Esophagus squamous epithelium (tissue), 5 donors: ENCODE measurements at regions of chr14 and their contacts with region 1.

Region 1: DNA sequence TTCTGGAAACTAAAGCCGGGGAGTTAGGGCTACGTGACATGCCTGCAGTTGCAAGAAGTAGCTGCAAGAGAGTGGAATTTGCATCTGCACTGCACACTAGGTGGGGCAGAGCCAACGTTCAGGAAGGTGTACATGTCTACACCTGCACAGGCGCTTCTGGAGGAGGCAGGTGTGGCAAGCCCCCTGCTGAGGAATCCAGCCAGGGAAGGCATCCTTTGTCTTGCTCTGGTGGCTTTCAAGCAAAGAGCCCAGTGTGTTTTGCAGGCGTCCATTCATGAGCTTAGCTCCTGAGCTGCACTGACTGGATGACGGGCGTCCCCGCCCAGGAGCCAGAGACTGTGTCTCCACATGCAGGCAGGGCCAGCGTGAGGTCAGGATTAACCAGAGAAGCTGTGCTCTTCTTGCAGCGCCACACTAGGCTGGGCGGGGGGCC is 116.3 kb downstream of the ZFP36L1 start:
- DNase-seq: no peak
- H3K4me3 ChIP-seq: no peak overlapping the region
- H3K27ac ChIP-seq: peak overlapping the region; percentile 83 to 93 (median 85)
- H3K4me1 ChIP-seq: peaks cover 42 to 86% (median 63%) of the 10 kb centered on the region in 3 donors
- H3K27me3 ChIP-seq: no peaks in the 10 kb centered on the region
- CTCF ChIP-seq: peak in 2 of 6 experiments; percentile 11 to 15
- POLR2A ChIP-seq: no peak

Region 2: GRCh38 chr14:68548194-68549056 is 128.1 kb before region 1 on chr14:
- intact Hi-C with region 1: loop called (anchors 10 kb)
- DNase-seq: no peak
- H3K4me3 ChIP-seq: peak overlapping the region in 1 of 4 donors; percentile 33
- H3K27ac ChIP-seq: peak overlapping the region; percentile 94 to 99 (median 96)
- H3K4me1 ChIP-seq: peaks cover 72 to 100% (median 73%) of the 10 kb centered on the region in 3 donors
- H3K27me3 ChIP-seq: no peaks in the 10 kb centered on the region
- CTCF ChIP-seq: no peak
- POLR2A ChIP-seq: peak in 2 of 4 donors; percentile 24 to 50

Region 3: DNA sequence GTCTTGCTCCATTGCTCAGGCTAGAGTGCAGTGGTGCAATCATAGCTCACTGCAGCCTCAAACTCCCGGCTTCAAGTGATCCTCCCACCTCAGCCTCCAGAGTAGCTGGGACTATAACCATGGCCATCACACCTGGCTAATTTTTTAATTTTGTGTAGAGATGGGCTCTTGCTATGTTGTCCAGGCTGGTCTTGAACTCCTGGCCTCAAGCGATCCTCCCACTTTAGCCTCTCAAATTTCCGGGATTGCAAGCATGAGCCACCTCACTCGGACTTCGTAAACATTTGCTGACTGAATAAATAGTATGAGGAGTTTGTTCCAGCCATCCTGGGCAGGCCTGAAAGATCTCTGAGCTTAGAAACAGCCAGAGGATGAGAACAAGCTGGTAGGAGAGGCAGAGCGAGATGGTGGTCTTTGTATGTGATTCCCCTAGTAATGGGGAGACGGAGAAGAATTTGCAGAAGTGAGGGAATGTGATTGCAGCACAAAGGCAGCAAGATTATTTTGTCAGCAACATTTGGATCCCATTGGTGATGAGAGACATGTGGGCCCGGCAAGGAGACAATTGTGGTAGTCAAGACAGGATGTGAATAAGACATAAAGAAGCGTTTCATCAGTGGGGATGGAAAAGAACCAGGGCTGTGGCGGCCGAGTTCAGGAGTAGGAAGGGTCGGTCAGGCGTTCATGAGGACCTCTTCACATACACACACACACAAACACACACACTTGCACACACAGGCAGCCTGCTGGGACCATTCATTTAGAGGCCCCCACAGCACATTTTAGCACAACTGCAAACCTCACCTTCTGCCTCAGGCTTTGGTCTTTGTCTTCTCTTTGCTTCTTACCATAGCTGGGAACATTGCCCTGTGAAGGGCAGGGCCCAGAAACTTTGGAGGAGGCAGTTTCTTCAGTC is 39.2 kb before region 1 on chr14:
- intact Hi-C with region 1: no loop called
- DNase-seq: no peak
- H3K4me3 ChIP-seq: no peak overlapping the region
- H3K27ac ChIP-seq: peak overlapping the region; percentile 60 to 87 (median 83)
- H3K4me1 ChIP-seq: peaks cover 23 to 55% (median 29%) of the 10 kb centered on the region in 3 donors
- H3K27me3 ChIP-seq: no peaks in the 10 kb centered on the region
- CTCF ChIP-seq: no peak
- POLR2A ChIP-seq: no peak

Region 4: DNA sequence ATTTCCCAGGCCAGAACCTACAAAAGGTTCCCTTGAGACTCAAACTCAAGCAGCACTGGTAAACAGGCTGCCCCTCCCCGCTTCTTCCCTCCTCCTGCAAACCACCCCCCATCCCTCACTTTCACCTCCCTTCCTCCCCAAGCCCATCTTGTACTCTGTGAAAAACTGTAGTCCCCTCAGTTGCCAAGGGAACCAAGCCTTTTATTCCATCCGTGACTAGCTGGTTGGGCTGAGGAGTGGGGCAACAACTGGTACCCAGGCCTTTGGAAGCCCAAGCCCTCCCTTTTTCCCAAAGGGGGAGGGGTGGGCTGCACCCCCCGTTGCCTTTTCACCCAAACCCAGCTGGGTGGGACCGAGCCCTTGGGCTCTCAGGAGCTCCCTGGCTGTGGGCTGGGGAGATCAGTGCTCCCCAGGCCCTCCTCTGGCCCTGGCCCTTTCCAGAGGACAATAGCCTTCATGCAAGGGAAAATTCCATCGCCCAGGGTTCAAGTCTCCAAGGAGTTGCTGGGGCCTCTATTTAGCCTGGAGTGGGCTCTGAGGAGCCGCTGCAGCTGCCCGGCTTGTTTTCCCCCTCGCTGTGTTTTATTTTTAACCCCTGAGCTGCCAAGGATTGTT is 54.4 kb after region 1 on chr14:
- intact Hi-C with region 1: no loop called
- DNase-seq: no peak
- H3K4me3 ChIP-seq: no peak overlapping the region
- H3K27ac ChIP-seq: peak overlapping the region in 3 of 4 donors; percentile 30 to 45 (median 34)
- H3K4me1 ChIP-seq: peaks cover 0 to 50% (median 24%) of the 10 kb centered on the region in 3 donors
- H3K27me3 ChIP-seq: no peaks in the 10 kb centered on the region
- CTCF ChIP-seq: no peak
- POLR2A ChIP-seq: no peak

Region 5: DNA sequence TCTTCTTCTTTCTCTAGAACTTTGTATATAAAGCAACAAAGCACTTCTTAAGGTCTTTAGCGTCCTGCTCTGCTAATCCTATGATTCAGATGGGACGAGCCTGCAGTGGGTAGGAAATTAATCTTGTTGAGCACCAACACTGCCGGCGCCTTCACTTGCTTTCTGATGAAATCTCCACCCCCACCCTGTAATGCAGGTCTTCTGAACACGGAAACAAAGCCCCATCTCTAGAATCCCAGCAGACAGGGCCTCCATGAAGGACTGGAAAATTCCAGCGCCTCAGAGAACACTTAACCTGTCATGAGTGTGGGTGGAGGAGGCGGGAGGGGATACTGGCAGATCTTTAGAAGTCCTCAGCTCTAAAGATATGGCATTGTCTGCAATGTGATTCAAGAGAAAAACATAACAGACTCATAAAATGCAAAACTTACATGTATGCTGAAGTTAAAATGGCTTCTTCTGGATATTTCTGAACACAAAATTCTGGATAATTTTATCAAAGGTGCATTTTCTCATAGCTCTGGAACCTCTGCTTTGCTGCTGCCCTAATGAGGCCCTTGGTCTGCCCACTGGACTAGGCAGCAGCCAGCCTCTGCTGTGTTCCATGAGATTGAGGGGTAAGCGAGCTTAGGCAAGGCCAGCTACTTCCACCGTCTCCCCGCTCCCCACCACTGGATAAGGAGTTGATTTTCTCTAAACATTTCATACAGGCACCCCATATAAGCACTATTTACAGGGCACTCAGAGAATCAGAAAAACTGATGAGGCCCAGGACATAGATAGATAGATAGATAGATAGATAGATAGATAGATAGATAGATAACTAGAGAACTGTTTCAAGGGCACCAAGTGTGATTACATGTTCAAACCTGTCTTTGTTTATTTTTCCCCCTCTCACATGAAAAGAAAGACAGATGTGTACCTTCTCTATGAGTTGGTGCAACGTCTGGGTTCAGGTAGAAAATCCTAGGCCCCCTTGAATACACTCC is 73.3 kb after region 1 on chr14:
- intact Hi-C with region 1: no loop called
- DNase-seq: no peak
- H3K4me3 ChIP-seq: no peak overlapping the region
- H3K27ac ChIP-seq: peak overlapping the region; percentile 55 to 71 (median 68)
- H3K4me1 ChIP-seq: peaks cover 0 to 40% (median 29%) of the 10 kb centered on the region in 3 donors
- H3K27me3 ChIP-seq: no peaks in the 10 kb centered on the region
- CTCF ChIP-seq: no peak
- POLR2A ChIP-seq: no peak

Region 6: DNA sequence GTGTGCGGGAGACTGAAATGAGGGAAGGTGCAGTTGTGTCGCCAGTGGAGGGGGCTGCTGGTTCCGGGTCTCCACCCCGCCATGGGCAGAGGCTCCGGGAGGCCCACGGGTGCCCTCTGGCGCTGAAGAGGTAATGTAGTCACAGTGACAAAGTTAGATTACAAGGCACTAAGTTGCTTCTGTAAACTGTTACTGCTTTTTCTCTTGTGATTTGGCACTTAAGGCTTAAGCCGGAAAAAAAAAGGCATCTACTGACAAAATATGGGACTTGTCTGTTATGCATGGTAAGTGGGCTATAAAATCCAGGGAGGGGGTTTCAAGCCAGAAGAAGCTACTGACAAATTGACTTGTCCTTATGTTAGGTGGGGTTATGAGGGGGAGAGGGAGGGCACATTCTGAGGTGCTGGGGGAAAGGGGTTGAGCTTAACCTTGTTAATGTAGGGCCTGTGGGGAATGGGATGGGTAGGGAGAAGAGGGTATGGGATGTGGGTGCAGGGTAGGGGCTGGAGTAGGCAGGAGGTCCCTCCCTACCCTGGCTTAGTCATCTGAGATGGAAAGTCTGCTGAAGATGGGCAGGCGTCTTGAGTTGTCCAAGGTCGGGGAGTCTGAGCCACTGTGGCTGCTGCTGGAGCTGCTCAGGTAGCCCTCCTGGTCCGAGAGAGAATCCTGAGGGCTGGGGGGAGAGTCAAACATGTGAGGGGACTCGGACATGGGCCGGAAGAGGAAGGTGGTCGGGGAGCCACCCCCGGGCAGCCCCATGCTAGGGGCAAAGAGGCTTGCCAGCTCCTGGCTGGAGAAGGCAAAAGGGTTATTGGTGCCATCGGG is 112.7 kb after region 1 on chr14:
- intact Hi-C with region 1: loop called (anchors 5 kb)
- DNase-seq: peak; percentile 23
- H3K4me3 ChIP-seq: peak overlapping the region; percentile 69 to 95 (median 86)
- H3K27ac ChIP-seq: peak overlapping the region; percentile 95 to 100 (median 99)
- H3K4me1 ChIP-seq: peaks cover 22 to 65% (median 29%) of the 10 kb centered on the region in 3 donors
- H3K27me3 ChIP-seq: no peaks in the 10 kb centered on the region
- CTCF ChIP-seq: peak; percentile 39 to 73 (median 58)
- POLR2A ChIP-seq: no peak